PC-9 (cell line): ENCODE measurements at regions of chr3 and their contacts with region 1.

Region 1: GRCh38 chr3:162302983-162303624 is 806.5 kb downstream of the OTOL1 start:
- DNase-seq: no peak
- H3K4me3 ChIP-seq: no peak overlapping the region
- H3K27ac ChIP-seq: no peak overlapping the region
- H3K4me1 ChIP-seq: no peaks in the 10 kb centered on the region
- H3K27me3 ChIP-seq: no peaks in the 10 kb centered on the region
- CTCF ChIP-seq: no peak

Region 2: DNA sequence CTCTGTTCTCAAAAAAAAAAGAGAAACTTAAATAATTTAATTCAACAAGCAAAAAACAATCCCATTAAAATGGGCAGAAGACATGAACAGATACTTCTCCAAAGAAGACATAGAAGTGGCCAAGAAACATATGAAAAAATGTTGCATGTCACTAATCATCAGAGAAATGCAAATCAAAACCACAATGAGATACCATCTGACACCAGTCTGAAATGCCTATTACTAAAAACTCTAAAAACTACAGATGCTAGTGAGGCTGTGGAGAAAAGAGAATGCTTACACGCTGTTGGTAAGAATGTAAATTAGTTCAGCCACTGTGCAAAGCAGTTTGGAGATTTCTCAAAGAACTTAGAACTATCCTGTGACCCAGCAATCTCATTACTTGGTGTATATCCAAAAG is 423.6 kb before region 1 on chr3:
- CTCF ChIA-PET with region 1: no interaction called
- POLR2A ChIA-PET with region 1: interaction called, 12 read pairs
- intact Hi-C with region 1: no loop called
- DNase-seq: no peak
- H3K4me3 ChIP-seq: no peak overlapping the region
- H3K27ac ChIP-seq: no peak overlapping the region
- H3K4me1 ChIP-seq: no peaks in the 10 kb centered on the region
- H3K27me3 ChIP-seq: no peaks in the 10 kb centered on the region
- CTCF ChIP-seq: no peak